PC-9 (cell line): ENCODE measurements at regions of chr6 and their contacts with region 1.

Region 1: DNA sequence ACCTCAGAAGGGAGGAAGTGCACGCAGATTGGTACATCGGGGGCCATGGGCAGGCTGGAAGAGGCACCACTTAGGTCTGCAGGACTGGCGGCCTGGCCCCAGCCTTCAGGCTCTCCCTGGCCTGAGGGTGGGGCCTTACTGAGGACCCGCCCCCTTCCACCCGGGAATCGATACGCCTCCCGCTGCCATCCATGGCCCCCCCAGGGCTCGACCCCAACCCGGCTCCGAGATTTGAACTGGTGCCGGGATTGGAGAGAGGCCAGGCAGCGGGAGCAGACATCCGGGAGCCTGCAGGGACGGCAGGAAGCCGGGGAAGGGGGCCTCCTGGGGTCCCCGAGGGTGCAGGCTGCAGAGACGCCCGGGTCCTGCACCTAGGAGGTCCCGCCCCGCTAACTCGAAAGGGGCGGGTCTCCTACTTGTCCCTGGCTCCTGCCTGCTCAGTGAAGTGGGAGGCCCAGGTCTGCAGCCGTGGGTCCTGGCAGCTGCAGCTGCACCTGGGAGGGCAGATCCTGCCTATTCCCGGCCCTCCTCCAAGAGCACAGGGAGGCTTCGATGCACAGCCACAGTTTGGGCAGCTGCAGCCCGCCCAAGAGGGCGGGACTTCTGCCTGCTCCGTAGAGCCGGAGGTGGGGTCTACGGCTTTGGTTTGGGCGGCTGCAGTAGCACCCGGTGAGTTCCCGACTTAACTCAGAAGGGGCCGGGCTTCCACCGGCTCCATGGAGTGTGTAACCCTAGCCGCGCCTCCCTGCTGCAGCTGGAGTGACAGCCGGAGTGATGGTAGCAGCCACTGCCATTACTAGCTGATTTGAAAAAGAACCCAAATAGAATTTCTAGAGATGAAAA is 35.2 kb upstream of the TBC1D22B start:
- DNase-seq: peak; percentile 92 to 93
- H3K4me3 ChIP-seq: peak overlapping the region; percentile 92
- H3K27ac ChIP-seq: no peak overlapping the region
- H3K4me1 ChIP-seq: peaks cover 14% of the 10 kb centered on the region
- H3K27me3 ChIP-seq: no peaks in the 10 kb centered on the region
- CTCF ChIP-seq: no peak

Region 2: GRCh38 chr6:36692220-36692619 is 530.1 kb before region 1 on chr6:
- CTCF ChIA-PET with region 1: no interaction called
- POLR2A ChIA-PET with region 1: no interaction called
- intact Hi-C with region 1: no loop called
- DNase-seq: no peak
- H3K4me3 ChIP-seq: no peak overlapping the region
- H3K27ac ChIP-seq: no peak overlapping the region
- H3K4me1 ChIP-seq: peaks cover 27% of the 10 kb centered on the region
- H3K27me3 ChIP-seq: no peaks in the 10 kb centered on the region
- CTCF ChIP-seq: no peak

Region 3: GRCh38 chr6:37110500-37111461 is 111.6 kb before region 1 on chr6:
- CTCF ChIA-PET with region 1: no interaction called
- POLR2A ChIA-PET with region 1: no interaction called
- intact Hi-C with region 1: no loop called
- DNase-seq: no peak
- H3K4me3 ChIP-seq: no peak overlapping the region
- H3K27ac ChIP-seq: peak overlapping the region; percentile 15
- H3K4me1 ChIP-seq: peaks cover 27% of the 10 kb centered on the region
- H3K27me3 ChIP-seq: no peaks in the 10 kb centered on the region
- CTCF ChIP-seq: no peak

Region 4: DNA sequence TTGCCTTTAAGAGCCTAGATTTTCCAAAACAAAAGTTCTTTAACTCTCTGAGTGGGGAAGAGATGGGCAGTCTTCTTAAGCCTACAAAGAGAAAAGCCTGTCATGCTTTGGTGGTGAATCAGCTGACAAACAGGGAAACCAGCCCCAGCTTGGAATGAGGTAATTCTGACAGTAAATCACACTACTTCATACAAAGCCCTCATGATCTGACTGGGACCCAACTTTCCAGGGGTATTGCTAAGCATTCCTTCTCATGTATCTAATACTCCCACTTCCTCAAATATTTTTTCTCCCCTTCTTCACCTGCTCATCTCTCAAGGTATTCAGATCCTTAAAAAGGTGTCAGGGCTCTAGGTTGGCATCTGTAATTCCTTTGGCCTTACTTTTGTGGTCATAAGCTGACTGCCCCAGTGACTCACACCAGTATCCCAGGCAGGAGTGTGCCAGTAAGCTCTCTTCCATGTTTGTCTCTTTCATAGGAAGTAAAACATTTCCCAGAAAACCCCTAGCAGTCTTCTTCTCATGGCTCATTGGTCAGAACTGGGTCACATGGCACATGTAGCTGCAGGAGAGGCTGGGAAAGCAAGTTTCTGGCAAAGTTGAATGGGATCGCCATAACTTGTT is 20.2 kb after region 1 on chr6:
- CTCF ChIA-PET with region 1: interaction called, 5 read pairs
- POLR2A ChIA-PET with region 1: interaction called, 6 read pairs
- intact Hi-C with region 1: loop called (anchors 1 kb)
- DNase-seq: peak; percentile 58 to 92
- H3K4me3 ChIP-seq: peak overlapping the region; percentile 45; the same call in 1 of the 2 replicates
- H3K27ac ChIP-seq: peak overlapping the region; percentile 87
- H3K4me1 ChIP-seq: peaks cover 46% of the 10 kb centered on the region
- H3K27me3 ChIP-seq: no peaks in the 10 kb centered on the region
- CTCF ChIP-seq: no peak

Region 5: DNA sequence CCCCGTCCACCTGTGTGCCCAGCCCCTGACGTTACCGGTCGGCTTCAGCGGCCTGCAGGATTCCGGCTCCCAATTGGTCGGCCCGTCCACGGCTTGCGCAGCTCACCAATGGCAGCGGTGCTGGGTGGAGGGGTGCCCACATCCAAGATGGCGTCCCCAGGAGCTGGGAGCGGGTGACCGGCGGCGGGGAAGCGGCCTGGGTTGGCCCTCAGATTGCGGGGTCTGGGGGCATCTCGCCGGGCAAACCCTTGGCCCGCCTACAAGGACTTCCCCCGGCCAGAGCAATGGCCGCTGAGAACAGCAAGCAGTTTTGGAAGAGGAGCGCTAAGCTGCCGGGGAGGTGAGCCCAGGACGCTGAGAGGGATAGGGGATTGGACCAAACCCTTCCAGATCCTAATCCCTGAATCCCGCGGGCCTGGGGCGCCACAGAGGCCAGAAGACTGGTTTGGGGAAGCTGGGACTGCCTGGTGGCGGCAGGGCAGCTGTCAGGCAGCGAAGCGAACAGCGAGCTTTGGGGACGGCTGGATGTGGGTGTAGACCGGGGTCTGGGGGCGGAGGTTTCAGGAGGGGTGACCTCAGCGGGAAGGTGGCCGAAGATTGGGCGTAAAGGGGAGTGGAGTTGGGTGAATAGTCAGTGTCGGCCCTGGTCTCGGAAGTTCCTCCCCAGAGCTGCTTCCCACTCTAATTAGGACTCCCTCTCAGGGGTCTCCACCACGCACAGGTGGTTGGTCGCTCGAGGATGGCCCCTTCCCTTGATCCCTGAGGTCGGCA is 35.5 kb after region 1 on chr6 and contains the starts of genes TBC1D22B and TMEM217:
- CTCF ChIA-PET with region 1: interaction called, 4 read pairs
- POLR2A ChIA-PET with region 1: interaction called, 5 read pairs
- intact Hi-C with region 1: loop called (anchors 1 kb)
- DNase-seq: peak; percentile 57 to 97
- H3K4me3 ChIP-seq: peak within 1 kb of the TSS; percentile 95
- H3K27ac ChIP-seq: peak within 1 kb of the TSS; percentile 75
- H3K4me1 ChIP-seq: peaks cover 25% of the 10 kb centered on the region; the same call in 1 of the 2 replicates
- H3K27me3 ChIP-seq: no peaks in the 10 kb centered on the region
- CTCF ChIP-seq: no peak
- total RNA-seq, gene TBC1D22B: 10.4 and 14.6 TPM in 2 replicates
- total RNA-seq, gene TMEM217: 4.9 and 5.3 TPM in 2 replicates

Region 6: DNA sequence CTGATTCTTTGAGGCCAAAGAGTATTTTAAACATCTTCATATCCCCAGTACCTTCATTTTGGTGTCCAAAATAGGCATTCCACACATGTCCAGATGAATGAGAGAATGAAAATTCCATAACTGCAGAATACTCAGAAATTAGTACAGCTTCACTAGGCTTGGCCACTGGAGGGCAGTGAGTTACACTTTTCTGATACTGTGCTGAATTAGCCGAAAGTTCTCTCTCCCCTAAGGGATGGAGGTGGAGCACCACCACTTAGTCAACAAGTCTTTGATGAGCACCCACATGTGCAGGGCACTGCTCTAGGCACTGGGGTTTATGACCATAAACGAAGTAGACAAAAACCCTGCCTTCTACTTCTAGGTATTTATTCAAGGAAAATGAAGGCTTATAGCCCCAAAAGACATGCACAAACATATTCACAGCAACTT is 81.6 kb after region 1 on chr6:
- CTCF ChIA-PET with region 1: no interaction called
- POLR2A ChIA-PET with region 1: no interaction called
- intact Hi-C with region 1: loop called (anchors 10 kb)
- DNase-seq: peak in 1 of 2 experiments; percentile 32
- H3K4me3 ChIP-seq: no peak overlapping the region
- H3K27ac ChIP-seq: no peak overlapping the region
- H3K4me1 ChIP-seq: no peaks in the 10 kb centered on the region
- H3K27me3 ChIP-seq: no peaks in the 10 kb centered on the region
- CTCF ChIP-seq: peak; percentile 64

Region 7: GRCh38 chr6:37473397-37474095 is 251.2 kb after region 1 on chr6:
- CTCF ChIA-PET with region 1: no interaction called
- POLR2A ChIA-PET with region 1: no interaction called
- intact Hi-C with region 1: no loop called
- DNase-seq: peak in 1 of 2 experiments; percentile 41
- H3K4me3 ChIP-seq: no peak overlapping the region
- H3K27ac ChIP-seq: no peak overlapping the region
- H3K4me1 ChIP-seq: no peaks in the 10 kb centered on the region
- H3K27me3 ChIP-seq: no peaks in the 10 kb centered on the region
- CTCF ChIP-seq: no peak